ENCODE measurements at regions of chr3 and their contacts with region 1.

Region 1: GRCh38 chr3:181700168-181701087 is 11.3 kb upstream of the SOX2 start:
- DNase-seq: no peak
- H3K4me3 ChIP-seq: peak overlapping the region; percentile 37
- CTCF ChIP-seq: peak; percentile 87

Region 2: DNA sequence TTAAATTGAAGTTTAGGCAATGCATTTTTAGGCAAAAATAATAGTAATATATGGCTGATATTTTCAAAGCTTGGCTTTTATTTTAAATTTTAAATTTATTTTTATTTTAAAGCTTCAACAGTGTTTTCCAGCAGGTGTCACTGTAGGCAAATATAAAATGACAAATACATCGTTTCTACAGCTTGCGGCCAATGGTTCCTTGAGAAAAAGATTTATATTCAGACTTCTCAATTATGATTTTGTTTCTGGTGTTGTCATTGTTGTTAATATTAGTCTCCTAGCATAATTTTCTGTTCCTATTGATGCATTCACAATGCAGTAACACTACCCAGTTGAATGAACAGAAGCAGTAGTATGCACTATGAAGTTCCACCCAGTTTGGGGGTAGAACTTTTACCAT is 490.2 kb before region 1 on chr3:
- CTCF ChIA-PET with region 1: interaction called, 24 read pairs
- POLR2A ChIA-PET with region 1: no interaction called
- DNase-seq: no peak
- H3K4me3 ChIP-seq: no peak overlapping the region
- CTCF ChIP-seq: no peak

Region 3: DNA sequence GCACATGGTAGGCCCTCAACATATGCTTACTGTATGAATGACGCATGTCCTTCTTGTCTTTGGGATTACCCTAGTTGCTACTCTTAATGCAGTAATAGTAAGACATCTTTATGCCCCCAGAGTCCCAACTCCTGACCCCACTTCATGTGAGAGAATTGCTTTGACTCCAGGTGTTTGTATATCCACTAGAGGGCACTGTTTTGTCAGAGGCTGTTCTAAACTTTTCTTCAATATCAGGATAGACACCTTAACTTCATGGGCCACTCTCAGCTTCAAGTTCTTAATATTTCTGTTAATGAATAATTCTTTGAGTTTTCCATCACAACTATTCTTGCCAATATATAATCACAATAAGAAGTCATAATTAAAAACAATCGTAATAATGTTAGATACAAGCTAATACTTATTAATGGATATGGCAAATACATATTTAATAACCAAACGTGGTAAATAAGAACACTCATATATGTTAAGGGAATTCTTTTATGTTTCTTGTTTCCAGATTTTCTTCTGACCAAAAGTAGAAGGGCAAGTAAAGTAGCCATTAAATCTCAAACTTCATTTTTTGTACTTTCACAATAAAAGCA is 373.7 kb before region 1 on chr3:
- CTCF ChIA-PET with region 1: interaction called, 49 read pairs
- POLR2A ChIA-PET with region 1: no interaction called
- DNase-seq: no peak
- H3K4me3 ChIP-seq: no peak overlapping the region
- CTCF ChIP-seq: peak; percentile 52

Region 4: GRCh38 chr3:181555681-181556080 is 144.7 kb before region 1 on chr3:
- CTCF ChIA-PET with region 1: no interaction called
- POLR2A ChIA-PET with region 1: no interaction called
- DNase-seq: no peak
- H3K4me3 ChIP-seq: no peak overlapping the region
- CTCF ChIP-seq: no peak

Region 5: DNA sequence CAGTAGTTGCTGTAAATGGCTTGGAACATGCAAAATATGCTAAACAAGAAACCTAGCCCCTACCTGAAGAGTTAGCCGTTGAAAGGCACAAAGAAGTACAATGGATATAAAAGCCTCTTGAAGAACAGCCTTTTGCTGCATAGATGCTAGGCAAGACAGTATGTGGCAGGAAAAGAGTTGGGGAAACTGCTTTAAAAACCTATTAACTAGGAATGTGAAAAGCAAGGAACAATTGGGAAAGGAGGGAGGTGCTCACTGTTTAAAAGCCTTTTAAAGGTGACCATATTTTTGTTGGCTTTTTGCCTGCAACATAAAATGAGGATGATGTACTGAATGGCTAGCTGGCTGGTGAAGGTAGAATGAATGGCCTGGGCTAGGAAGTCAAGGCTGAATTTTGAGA is 13.2 kb before region 1 on chr3:
- CTCF ChIA-PET with region 1: interaction called, 27 read pairs
- POLR2A ChIA-PET with region 1: no interaction called
- DNase-seq: no peak
- H3K4me3 ChIP-seq: no peak overlapping the region
- CTCF ChIP-seq: no peak

Region 6: GRCh38 chr3:181886676-181887075 is 186.2 kb after region 1 on chr3:
- CTCF ChIA-PET with region 1: no interaction called
- POLR2A ChIA-PET with region 1: no interaction called
- DNase-seq: no peak
- H3K4me3 ChIP-seq: no peak overlapping the region
- CTCF ChIP-seq: no peak

Region 7: DNA sequence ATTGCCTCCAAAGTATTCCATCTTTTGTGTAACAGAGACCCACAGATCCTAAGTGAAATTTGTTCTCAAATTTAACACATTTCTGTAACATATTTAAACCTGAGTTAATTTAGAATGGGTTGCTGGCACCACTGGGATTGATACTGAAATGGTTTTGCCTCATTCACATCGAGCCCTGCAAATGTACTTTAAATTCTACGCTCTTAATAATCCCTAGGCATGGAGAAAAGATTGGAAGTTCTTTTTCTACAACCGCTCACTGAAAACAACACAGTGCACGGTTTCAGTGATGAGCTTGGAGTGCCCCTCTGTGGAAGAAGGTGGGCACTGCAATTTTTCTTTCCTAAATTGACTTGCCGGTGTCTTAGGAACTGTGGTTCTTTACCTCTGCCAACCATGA is 983.0 kb after region 1 on chr3:
- CTCF ChIA-PET with region 1: interaction called, 117 read pairs
- POLR2A ChIA-PET with region 1: no interaction called
- DNase-seq: peak; percentile 17
- H3K4me3 ChIP-seq: no peak overlapping the region
- CTCF ChIP-seq: peak; percentile 80

Measured in AG04449 (cell line).